ENCODE measurements at regions of chr12 and their contacts with region 1.

Region 1: DNA sequence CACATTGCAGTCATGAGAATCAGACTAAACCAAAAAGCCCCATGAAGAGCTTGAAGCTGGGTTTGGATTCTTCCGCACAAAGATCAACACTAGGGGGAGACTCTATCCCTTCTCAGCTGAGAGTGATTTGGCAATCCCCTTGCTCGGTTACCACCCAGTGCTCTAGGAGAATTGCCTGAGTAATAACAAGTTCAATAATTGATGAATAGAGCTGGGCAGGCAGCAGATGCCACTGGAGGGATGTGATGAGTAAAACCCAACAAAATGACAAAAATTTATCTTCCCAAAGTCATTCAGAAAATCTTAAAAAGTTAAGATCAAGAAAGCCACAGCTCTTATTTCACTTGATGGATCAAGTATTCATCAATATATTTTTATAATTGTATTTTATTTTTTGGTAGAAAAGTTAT is 185.6 kb upstream of the ARID2 start:
- DNase-seq: peak; percentile 56
- H3K4me3 Mint-ChIP-seq: no peak overlapping the region
- H3K27ac Mint-ChIP-seq: no peak overlapping the region
- H3K4me1 Mint-ChIP-seq: peaks cover 4% of the 10 kb centered on the region
- H3K27me3 Mint-ChIP-seq: peaks cover 3% of the 10 kb centered on the region

Region 2: GRCh38 chr12:45509187-45509586 is 34.7 kb before region 1 on chr12:
- CTCF ChIA-PET with region 1: no interaction called
- POLR2A ChIA-PET with region 1: no interaction called
- DNase-seq: no peak
- H3K4me3 Mint-ChIP-seq: no peak overlapping the region
- H3K27ac Mint-ChIP-seq: no peak overlapping the region
- H3K4me1 Mint-ChIP-seq: no peaks in the 10 kb centered on the region
- H3K27me3 Mint-ChIP-seq: no peaks in the 10 kb centered on the region

Region 3: DNA sequence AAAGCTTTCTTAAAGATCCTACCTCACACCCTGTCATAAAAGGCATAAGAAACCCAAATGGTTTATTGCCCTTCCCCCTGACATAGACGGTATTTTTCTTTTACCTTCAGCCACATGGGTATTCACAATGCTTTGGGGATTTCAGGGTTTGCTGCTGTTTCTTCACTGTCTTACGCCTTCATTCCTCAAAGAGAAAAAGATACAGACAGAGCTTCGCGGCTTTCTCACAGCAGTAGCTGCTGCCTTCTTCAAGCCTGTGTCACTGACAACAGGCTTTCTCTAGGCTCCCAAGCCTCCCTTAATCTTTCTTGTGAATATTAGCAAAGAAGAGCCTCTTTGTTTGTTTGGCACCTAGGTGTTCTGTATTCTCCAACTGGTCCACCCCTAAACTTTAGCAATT is 11.8 kb before region 1 on chr12:
- CTCF ChIA-PET with region 1: interaction called, 18 read pairs
- POLR2A ChIA-PET with region 1: no interaction called
- DNase-seq: no peak
- H3K4me3 Mint-ChIP-seq: no peak overlapping the region
- H3K27ac Mint-ChIP-seq: no peak overlapping the region
- H3K4me1 Mint-ChIP-seq: no peaks in the 10 kb centered on the region
- H3K27me3 Mint-ChIP-seq: peaks cover 18% of the 10 kb centered on the region

Region 4: GRCh38 chr12:45670346-45671065 is 126.6 kb after region 1 on chr12:
- CTCF ChIA-PET with region 1: interaction called, 23 read pairs
- POLR2A ChIA-PET with region 1: interaction called, 5 read pairs
- DNase-seq: no peak
- H3K4me3 Mint-ChIP-seq: peak overlapping the region; percentile 19
- H3K27ac Mint-ChIP-seq: peak overlapping the region; percentile 55
- H3K4me1 Mint-ChIP-seq: peaks cover 39% of the 10 kb centered on the region
- H3K27me3 Mint-ChIP-seq: peaks cover 14% of the 10 kb centered on the region

Region 5: GRCh38 chr12:45745861-45746277 is 202.0 kb after region 1 on chr12:
- CTCF ChIA-PET with region 1: interaction called, 55 read pairs
- POLR2A ChIA-PET with region 1: no interaction called
- DNase-seq: no peak
- H3K4me3 Mint-ChIP-seq: no peak overlapping the region
- H3K27ac Mint-ChIP-seq: no peak overlapping the region
- H3K4me1 Mint-ChIP-seq: peaks cover 25% of the 10 kb centered on the region
- H3K27me3 Mint-ChIP-seq: no peaks in the 10 kb centered on the region

Region 6: GRCh38 chr12:45762185-45763110 is 218.5 kb after region 1 on chr12:
- CTCF ChIA-PET with region 1: interaction called, 10 read pairs
- POLR2A ChIA-PET with region 1: no interaction called
- DNase-seq: no peak
- H3K4me3 Mint-ChIP-seq: no peak overlapping the region
- H3K27ac Mint-ChIP-seq: no peak overlapping the region
- H3K4me1 Mint-ChIP-seq: peaks cover 2% of the 10 kb centered on the region
- H3K27me3 Mint-ChIP-seq: no peaks in the 10 kb centered on the region